Sigmoid colon (tissue), 7 donors: ENCODE measurements at regions of chr12 and their contacts with region 1.

Region 1: DNA sequence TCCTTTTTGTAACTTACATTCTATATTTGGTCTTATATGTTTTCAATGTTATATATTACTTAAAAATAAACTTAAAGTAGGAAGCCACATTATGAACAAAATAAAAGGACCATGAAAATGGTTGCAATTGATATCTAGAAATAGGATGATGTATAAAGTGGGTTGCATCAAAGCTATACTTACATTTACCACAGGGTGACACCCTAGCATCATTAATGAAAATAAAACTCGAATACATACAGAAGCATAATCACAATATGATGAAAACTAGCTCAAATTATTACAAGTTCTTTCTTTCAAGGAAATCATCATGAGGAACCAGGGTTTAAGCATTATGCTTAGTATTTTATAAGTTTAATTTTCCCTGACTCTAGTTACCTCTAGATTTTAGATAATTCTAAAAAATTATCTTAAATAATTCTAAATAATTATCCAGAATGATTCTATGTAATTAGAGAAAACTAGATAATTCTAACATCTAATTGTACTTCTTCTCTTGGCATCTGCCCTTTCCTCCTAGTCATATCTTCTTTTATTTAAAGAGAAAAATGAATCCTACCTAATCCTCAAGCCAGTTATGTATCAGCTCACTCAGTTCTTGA is 31.2 kb downstream of the TAS2R7 start:
- DNase-seq: no peak
- H3K4me3 ChIP-seq: no peak overlapping the region
- H3K27ac ChIP-seq: no peak overlapping the region
- H3K4me1 ChIP-seq: no peaks in the 10 kb centered on the region
- H3K27me3 ChIP-seq: peaks cover 0 to 11% (median 0%) of the 10 kb centered on the region in 3 donors
- CTCF ChIP-seq: peak; percentile 24 to 65 (median 43)
- EP300 ChIP-seq: no peak
- POLR2A ChIP-seq: no peak

Region 2: GRCh38 chr12:10395390-10395998 is 375.7 kb before region 1 on chr12:
- intact Hi-C with region 1: no loop called
- DNase-seq: peak; percentile 71
- H3K4me3 ChIP-seq: peak overlapping the region in 2 of 4 donors; percentile 10 to 15
- H3K27ac ChIP-seq: peak overlapping the region; percentile 31 to 73 (median 66)
- H3K4me1 ChIP-seq: peaks cover 0 to 16% (median 14%) of the 10 kb centered on the region in 4 donors
- H3K27me3 ChIP-seq: no peaks in the 10 kb centered on the region
- CTCF ChIP-seq: no peak
- EP300 ChIP-seq: no peak
- POLR2A ChIP-seq: no peak

Region 3: GRCh38 chr12:11202811-11203210 is 431.6 kb after region 1 on chr12:
- intact Hi-C with region 1: loop called (anchors 1 kb)
- DNase-seq: no peak
- H3K4me3 ChIP-seq: no peak overlapping the region
- H3K27ac ChIP-seq: no peak overlapping the region
- H3K4me1 ChIP-seq: no peaks in the 10 kb centered on the region
- H3K27me3 ChIP-seq: no peaks in the 10 kb centered on the region
- CTCF ChIP-seq: no peak
- EP300 ChIP-seq: no peak
- POLR2A ChIP-seq: no peak

Region 4: GRCh38 chr12:11486623-11487444 is 715.6 kb after region 1 on chr12:
- intact Hi-C with region 1: loop called (anchors 2 kb)
- DNase-seq: peak; percentile 83
- H3K4me3 ChIP-seq: no peak overlapping the region
- H3K27ac ChIP-seq: no peak overlapping the region
- H3K4me1 ChIP-seq: no peaks in the 10 kb centered on the region
- H3K27me3 ChIP-seq: no peaks in the 10 kb centered on the region
- CTCF ChIP-seq: peak; percentile 55 to 91 (median 84)
- EP300 ChIP-seq: no peak
- POLR2A ChIP-seq: no peak